ENCODE measurements at regions of chr6 and their contacts with region 1.

Region 1: GRCh38 chr6:17706580-17707370 is at the start of gene NUP153:
- DNase-seq: peak; percentile 100
- H3K4me3 Mint-ChIP-seq: peak within 1 kb of the TSS; percentile 93
- H3K27ac Mint-ChIP-seq: peak within 1 kb of the TSS; percentile 99
- H3K4me1 Mint-ChIP-seq: peaks cover 28% of the 10 kb centered on the region
- H3K27me3 Mint-ChIP-seq: no peaks in the 10 kb centered on the region
- total RNA-seq, gene NUP153: 65.3 to 67.2 TPM

Region 2: DNA sequence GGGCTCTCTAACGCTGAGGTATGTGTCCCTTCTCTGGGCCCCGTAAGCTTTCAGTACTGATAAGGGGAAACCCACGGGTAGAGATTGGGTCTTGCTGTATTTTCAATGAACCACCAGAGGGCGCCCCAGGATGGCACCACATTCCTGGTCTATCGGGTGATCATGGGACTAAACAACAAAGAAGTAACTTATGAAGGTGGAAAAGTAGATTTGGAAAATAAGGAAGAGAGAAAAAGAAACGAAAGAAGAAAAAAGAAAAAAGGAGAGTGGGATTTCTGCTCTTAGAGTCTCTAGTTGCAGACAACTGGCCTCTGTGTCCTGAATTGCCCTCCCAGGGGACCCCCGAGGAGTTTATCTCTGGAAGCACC is 1374.6 kb before region 1 on chr6:
- CTCF ChIA-PET with region 1: no interaction called
- intact Hi-C with region 1: no loop called
- DNase-seq: peak; percentile 94
- H3K4me3 Mint-ChIP-seq: no peak overlapping the region
- H3K27ac Mint-ChIP-seq: no peak overlapping the region
- H3K4me1 Mint-ChIP-seq: no peaks in the 10 kb centered on the region
- H3K27me3 Mint-ChIP-seq: no peaks in the 10 kb centered on the region

Region 3: GRCh38 chr6:16471222-16471909 is 1235.4 kb before region 1 on chr6:
- CTCF ChIA-PET with region 1: no interaction called
- intact Hi-C with region 1: loop called (anchors 10 kb)
- DNase-seq: no peak
- H3K4me3 Mint-ChIP-seq: no peak overlapping the region
- H3K27ac Mint-ChIP-seq: peak overlapping the region; percentile 68
- H3K4me1 Mint-ChIP-seq: peaks cover 60% of the 10 kb centered on the region
- H3K27me3 Mint-ChIP-seq: no peaks in the 10 kb centered on the region

Region 4: GRCh38 chr6:17599885-17600526 is 106.8 kb before region 1 on chr6 and contains the start of gene FAM8A1:
- CTCF ChIA-PET with region 1: interaction called, 4 read pairs
- intact Hi-C with region 1: loop called (anchors 1 kb)
- DNase-seq: peak; percentile 98
- H3K4me3 Mint-ChIP-seq: peak within 1 kb of the TSS; percentile 75
- H3K27ac Mint-ChIP-seq: peak within 1 kb of the TSS; percentile 53
- H3K4me1 Mint-ChIP-seq: peaks cover 29% of the 10 kb centered on the region
- H3K27me3 Mint-ChIP-seq: no peaks in the 10 kb centered on the region
- total RNA-seq, gene FAM8A1: 2.9 to 3.0 TPM

Region 5: GRCh38 chr6:17673543-17674254 is 33.1 kb before region 1 on chr6:
- CTCF ChIA-PET with region 1: interaction called, 5 read pairs
- intact Hi-C with region 1: loop called (anchors 1 kb)
- DNase-seq: no peak
- H3K4me3 Mint-ChIP-seq: no peak overlapping the region
- H3K27ac Mint-ChIP-seq: no peak overlapping the region
- H3K4me1 Mint-ChIP-seq: peaks cover 28% of the 10 kb centered on the region
- H3K27me3 Mint-ChIP-seq: no peaks in the 10 kb centered on the region

Region 6: GRCh38 chr6:17905611-17906592 is 199.1 kb after region 1 on chr6:
- CTCF ChIA-PET with region 1: no interaction called
- intact Hi-C with region 1: no loop called
- DNase-seq: no peak
- H3K4me3 Mint-ChIP-seq: no peak overlapping the region
- H3K27ac Mint-ChIP-seq: no peak overlapping the region
- H3K4me1 Mint-ChIP-seq: no peaks in the 10 kb centered on the region
- H3K27me3 Mint-ChIP-seq: peaks cover 23% of the 10 kb centered on the region

Region 7: GRCh38 chr6:18155150-18155863 is 448.5 kb after region 1 on chr6 and contains the start of gene KDM1B:
- CTCF ChIA-PET with region 1: no interaction called
- intact Hi-C with region 1: loop called (anchors 1 kb)
- DNase-seq: peak; percentile 98
- H3K4me3 Mint-ChIP-seq: peak within 1 kb of the TSS; percentile 97
- H3K27ac Mint-ChIP-seq: peak within 1 kb of the TSS; percentile 88
- H3K4me1 Mint-ChIP-seq: peaks cover 22% of the 10 kb centered on the region
- H3K27me3 Mint-ChIP-seq: no peaks in the 10 kb centered on the region
- total RNA-seq, gene KDM1B: 14.4 to 15.2 TPM